ENCODE measurements at regions of chr14 and their contacts with region 1.

Region 1: DNA sequence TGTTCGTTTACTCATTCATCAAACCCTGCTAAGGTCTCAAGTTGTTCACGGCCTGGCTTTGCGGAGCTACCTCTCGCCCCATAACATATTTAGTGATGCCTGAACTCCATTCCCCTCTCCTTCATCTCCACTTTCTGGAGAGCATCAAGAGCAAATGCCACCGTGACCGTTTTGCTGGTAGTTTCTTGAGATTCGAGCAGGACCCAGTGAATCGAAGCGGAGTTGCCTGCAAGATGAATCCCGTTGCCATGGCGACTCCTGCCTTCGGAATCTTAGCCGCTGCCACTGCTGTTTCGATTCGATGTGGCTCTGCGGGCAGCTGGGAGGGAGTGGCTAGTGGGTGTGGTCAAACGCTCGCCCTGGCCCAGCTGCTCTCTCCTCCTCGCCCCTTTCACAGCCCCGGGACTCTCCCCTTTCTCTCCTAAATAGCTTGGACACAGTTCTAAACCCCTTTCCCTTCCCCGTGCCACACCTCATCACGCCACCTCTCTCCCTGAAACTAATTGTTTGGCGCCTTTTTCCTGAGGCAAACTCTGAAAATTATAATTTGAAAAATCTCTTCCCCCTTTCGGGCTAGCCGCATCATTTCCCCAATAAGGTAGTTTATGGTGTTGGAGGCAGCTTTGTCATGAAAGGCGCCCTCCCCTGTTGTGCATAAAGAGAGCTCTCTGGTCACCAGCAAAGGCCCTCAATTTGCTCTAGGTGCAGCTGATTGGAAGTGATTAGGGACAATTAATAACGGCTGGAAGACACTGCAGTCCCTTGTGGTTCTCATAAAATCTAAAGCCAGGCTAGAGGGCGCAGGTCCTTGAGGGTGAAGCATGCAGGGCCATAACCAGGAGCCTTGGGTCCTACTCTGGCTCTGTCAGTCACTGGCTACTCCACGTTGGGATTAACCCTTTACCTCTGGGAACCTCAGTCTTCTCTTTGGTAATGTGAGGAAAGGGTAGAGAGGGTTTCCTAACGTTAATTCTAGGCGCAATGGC is 1.6 kb downstream of the DAAM1 start:
- DNase-seq: peak; percentile 93 to 94
- H3K4me3 ChIP-seq: peak overlapping the region; percentile 75 to 84
- H3K27ac ChIP-seq: peak overlapping the region; percentile 91 to 93
- H3K4me1 ChIP-seq: peaks cover 0 to 55% (median 28%) of the 10 kb centered on the region in 4 donors
- H3K27me3 ChIP-seq: no peaks in the 10 kb centered on the region
- CTCF ChIP-seq: no peak

Region 2: DNA sequence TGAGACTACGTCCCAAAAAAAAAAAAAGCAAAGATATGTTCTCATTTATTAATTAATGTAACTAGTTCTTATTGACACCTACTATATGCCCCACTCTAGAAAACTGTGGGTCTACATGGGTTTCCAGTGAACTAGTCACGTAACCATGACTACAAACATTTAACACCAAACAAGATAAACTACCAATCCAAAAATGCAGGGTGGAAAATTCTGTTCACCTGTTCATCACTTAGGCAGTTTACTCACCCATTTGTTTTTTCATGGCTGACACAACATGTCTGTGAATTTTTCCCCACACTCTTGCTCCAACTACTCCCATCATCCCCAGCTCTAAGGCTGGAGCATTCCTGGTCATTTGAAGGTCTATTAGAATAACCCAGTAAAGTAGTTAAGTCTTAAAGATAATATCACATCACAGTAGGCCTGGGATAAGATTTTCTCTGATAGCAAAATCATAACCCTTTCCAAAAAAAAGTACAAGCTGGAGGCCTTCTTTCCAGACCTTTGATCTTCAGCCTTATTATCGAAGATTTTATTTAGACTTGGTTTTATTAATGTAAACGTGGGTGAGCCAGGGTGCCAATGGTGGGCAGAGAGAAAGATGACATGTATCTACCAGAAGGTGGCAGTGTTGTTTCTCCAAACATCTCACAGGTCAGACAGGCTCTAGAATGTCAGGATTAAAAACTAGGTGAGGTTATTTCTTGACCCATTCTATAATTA is 63.2 kb before region 1 on chr14:
- intact Hi-C with region 1: loop called (anchors 5 kb)
- DNase-seq: no peak
- H3K4me3 ChIP-seq: no peak overlapping the region
- H3K27ac ChIP-seq: no peak overlapping the region
- H3K4me1 ChIP-seq: peaks cover 0 to 5% (median 2%) of the 10 kb centered on the region in 4 donors
- H3K27me3 ChIP-seq: no peaks in the 10 kb centered on the region
- CTCF ChIP-seq: peak; percentile 75 to 87

Region 3: GRCh38 chr14:59320763-59321640 is 130.9 kb after region 1 on chr14:
- intact Hi-C with region 1: no loop called
- DNase-seq: no peak
- H3K4me3 ChIP-seq: no peak overlapping the region
- H3K27ac ChIP-seq: peak overlapping the region; percentile 66 to 68
- H3K4me1 ChIP-seq: peaks cover 0 to 69% (median 44%) of the 10 kb centered on the region in 4 donors
- H3K27me3 ChIP-seq: no peaks in the 10 kb centered on the region
- CTCF ChIP-seq: no peak

Region 4: DNA sequence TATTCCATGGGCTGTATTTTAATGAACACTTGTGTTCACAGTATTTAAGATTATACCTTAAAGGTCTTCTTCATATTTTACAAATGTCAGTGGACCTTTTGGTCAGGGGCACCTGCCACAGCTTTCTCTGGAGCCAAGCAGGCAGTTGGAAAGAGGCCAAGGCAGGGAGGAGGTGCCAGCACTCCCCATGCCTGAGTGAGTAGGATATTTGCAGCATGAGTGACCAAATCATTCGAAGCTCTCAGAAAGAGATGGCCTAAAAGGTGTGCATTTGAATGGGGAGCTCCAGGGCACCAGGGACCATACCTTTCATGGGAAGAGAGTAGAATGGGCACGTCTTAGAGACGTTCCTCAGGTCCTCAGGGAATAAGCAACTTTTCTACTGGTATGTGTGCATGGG is 153.5 kb after region 1 on chr14:
- intact Hi-C with region 1: loop called (anchors 5 kb)
- DNase-seq: no peak
- H3K4me3 ChIP-seq: no peak overlapping the region
- H3K27ac ChIP-seq: peak overlapping the region in 1 of 2 donors; percentile 41
- H3K4me1 ChIP-seq: peaks cover 0 to 81% (median 29%) of the 10 kb centered on the region in 4 donors
- H3K27me3 ChIP-seq: no peaks in the 10 kb centered on the region
- CTCF ChIP-seq: no peak

Region 5: DNA sequence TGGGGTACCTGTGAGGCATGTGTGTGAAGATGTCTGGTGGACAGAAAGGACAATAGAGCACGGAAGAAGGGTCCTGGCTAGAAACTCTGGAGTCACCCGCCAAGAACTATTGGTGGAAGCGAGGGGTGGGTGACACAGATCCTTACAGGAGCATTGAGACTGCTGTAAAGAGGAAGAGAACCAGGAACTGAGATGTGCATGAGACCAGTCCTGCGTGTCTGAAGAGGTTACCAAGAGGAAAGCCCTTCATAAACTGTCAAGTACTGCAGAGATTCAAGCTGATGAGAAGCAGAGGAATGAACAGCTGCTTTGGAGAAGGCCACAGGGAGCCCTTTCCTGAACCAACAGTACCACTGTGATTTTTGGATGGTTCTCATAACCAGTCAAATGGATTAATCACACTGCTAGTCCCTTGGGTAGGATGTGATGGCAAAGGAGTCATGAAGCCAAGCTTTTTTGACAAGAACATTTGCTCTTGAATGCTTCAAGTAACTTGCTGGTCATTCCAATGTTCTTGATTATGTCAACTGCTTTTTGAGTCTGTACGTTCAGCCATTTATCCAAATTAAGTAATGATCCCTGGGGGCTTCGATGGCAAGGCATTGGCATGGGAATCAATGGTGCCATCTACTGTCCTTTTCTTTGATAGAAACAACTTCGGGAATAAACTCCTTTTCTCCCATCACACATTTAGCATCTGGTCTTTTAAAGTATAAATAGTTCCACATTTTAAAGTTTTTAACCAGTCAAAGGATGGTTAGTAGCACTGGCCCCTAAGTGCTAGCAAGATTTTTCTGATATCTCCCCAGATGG is 232.2 kb after region 1 on chr14:
- intact Hi-C with region 1: loop called (anchors 5 kb)
- DNase-seq: no peak
- H3K4me3 ChIP-seq: no peak overlapping the region
- H3K27ac ChIP-seq: peak overlapping the region; percentile 62 to 72
- H3K4me1 ChIP-seq: peaks cover 0 to 77% (median 29%) of the 10 kb centered on the region in 4 donors
- H3K27me3 ChIP-seq: no peaks in the 10 kb centered on the region
- CTCF ChIP-seq: peak in 1 of 2 experiments; percentile 30

Region 6: DNA sequence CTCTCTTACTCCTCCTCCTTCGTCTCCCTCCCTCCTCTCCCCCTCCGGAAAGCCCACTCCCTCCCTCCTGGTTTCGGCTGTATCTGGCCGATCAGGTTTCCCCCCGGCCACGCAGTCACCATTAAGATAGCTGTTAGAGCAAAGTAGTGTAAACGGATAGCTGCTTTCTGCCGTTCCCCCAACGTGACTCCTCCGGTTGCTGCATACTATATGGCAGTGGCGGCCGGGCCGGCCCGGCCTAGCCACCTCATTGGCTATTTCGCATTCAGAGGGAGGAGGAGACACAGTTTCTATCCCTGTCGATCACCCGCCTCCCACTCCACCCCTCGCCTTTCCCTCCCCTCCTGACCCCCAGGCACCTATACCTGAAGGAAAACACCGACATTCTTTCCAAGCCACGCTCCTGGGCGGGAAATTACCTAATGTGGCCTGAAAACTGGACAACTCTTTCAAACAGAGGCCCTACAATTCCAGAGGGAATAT is 1534.1 kb after region 1 on chr14 and contains the start of gene SIX4:
- intact Hi-C with region 1: no loop called
- DNase-seq: peak; percentile 67 to 86
- H3K4me3 ChIP-seq: peak within 1 kb of the TSS; percentile 71 to 76
- H3K27ac ChIP-seq: peak within 1 kb of the TSS; percentile 77 to 88
- H3K4me1 ChIP-seq: peaks cover 0 to 22% (median 9%) of the 10 kb centered on the region in 4 donors
- H3K27me3 ChIP-seq: peaks cover 0 to 3% of the 10 kb centered on the region in 2 donors
- CTCF ChIP-seq: no peak